ENCODE measurements at regions of chr4 and their contacts with region 1.

Region 1: GRCh38 chr4:8315435-8316250 is 46.1 kb downstream of the HTRA3 start:
- DNase-seq: no peak
- ATAC-seq: peak; percentile 77
- H3K4me3 Mint-ChIP-seq: no peak overlapping the region
- H3K27ac Mint-ChIP-seq: no peak overlapping the region
- H3K4me1 Mint-ChIP-seq: peaks cover 18% of the 10 kb centered on the region
- H3K27me3 Mint-ChIP-seq: peaks cover 3% of the 10 kb centered on the region; the same call in 1 of the 2 replicates
- CTCF ChIP-seq: no peak

Region 2: GRCh38 chr4:7557447-7557846 is 758.2 kb before region 1 on chr4:
- CTCF ChIA-PET with region 1: no interaction called
- POLR2A ChIA-PET with region 1: no interaction called
- DNase-seq: no peak
- ATAC-seq: no peak
- H3K4me3 Mint-ChIP-seq: no peak overlapping the region
- H3K27ac Mint-ChIP-seq: no peak overlapping the region
- H3K4me1 Mint-ChIP-seq: no peaks in the 10 kb centered on the region
- H3K27me3 Mint-ChIP-seq: peaks cover 5% of the 10 kb centered on the region
- CTCF ChIP-seq: no peak

Region 3: DNA sequence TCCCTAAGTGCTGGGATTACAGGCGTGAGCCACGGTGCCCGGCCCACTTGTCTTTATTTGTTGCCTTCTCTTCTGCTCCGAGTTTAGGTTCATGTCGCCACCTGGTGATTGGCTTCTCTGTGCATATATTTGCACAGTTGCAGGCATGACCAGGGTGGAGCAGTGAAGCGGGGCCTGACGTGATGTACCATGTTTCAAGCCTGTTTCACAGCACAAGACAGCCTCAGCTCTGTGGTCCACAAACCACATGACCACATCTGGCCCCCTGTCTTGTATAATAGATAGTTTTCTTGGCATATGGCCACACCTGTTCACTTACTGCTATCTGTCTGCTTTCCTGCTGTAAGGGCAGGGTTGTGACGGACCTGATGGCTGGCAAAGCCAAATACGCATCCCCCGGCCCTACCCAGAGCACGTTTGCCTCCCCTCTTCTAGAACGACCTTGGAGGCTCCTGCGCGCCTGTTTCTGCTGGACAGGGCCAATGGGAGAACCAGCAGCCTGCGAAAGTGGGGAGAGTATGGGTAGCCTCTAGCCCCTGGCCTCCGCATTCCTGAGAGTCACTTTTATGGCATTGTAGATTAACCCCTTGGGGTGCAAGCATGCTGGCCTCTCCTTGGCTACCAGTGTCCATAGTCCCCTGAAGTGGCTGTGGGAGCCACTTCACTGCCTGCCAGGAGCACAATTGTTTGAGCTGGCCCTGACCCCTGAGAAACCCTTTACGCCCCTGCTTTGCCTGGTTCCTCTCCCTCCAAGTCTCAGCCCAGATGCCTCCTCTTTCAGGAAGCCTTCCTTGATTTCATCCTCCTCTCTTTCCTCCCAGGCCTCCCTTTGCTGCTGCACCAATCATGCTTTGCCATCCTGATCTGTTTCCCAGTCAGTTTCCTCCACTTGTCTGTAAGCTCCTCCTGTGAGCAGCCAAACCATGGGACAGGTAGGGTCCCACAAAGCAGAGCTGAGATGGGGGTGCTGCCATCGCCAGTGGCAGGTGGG is 122.6 kb before region 1 on chr4:
- CTCF ChIA-PET with region 1: no interaction called
- POLR2A ChIA-PET with region 1: no interaction called
- DNase-seq: no peak
- ATAC-seq: peak; percentile 18; the same call in 1 of the 2 replicates
- H3K4me3 Mint-ChIP-seq: no peak overlapping the region
- H3K27ac Mint-ChIP-seq: no peak overlapping the region
- H3K4me1 Mint-ChIP-seq: peaks cover 3% of the 10 kb centered on the region; the same call in 1 of the 2 replicates
- H3K27me3 Mint-ChIP-seq: no peaks in the 10 kb centered on the region
- CTCF ChIP-seq: no peak

Region 4: GRCh38 chr4:8267077-8267476 is 48.6 kb before region 1 on chr4:
- CTCF ChIA-PET with region 1: interaction called, 18 read pairs
- POLR2A ChIA-PET with region 1: no interaction called
- DNase-seq: peak; percentile 78
- ATAC-seq: peak; percentile 68
- H3K4me3 Mint-ChIP-seq: no peak overlapping the region
- H3K27ac Mint-ChIP-seq: no peak overlapping the region
- H3K4me1 Mint-ChIP-seq: peaks cover 7% of the 10 kb centered on the region; the same call in 1 of the 2 replicates
- H3K27me3 Mint-ChIP-seq: peaks cover 30% of the 10 kb centered on the region
- CTCF ChIP-seq: peak; percentile 65

Region 5: DNA sequence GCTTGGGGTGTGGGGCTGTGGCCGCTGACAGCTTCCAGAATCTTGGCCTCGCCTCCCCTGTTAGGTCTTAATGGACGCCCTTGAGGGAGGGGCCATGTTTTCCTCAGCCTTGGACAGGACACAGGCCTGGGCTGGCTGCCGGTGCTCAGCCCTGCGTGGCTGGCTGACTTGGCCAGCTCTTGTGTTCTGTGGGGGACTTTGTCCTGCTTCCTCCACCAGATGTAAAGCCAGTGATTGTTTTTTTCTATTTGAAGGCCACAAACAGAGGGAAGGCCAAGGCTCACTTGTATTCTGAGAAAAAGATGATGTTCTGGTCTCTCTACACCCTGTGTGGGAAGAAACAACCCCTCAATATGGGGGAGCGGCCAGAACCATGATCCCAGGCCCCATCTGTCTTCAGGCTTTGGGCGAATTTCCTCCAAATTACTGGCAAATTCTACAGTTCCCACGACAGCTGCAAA is 25.2 kb after region 1 on chr4:
- CTCF ChIA-PET with region 1: interaction called, 39 read pairs
- POLR2A ChIA-PET with region 1: no interaction called
- DNase-seq: no peak
- ATAC-seq: no peak
- H3K4me3 Mint-ChIP-seq: no peak overlapping the region
- H3K27ac Mint-ChIP-seq: no peak overlapping the region
- H3K4me1 Mint-ChIP-seq: peaks cover 7% of the 10 kb centered on the region
- H3K27me3 Mint-ChIP-seq: peaks cover 5% of the 10 kb centered on the region; the same call in 1 of the 2 replicates
- CTCF ChIP-seq: no peak

Region 6: GRCh38 chr4:8391972-8392371 is 76.3 kb after region 1 on chr4:
- CTCF ChIA-PET with region 1: interaction called, 25 read pairs
- POLR2A ChIA-PET with region 1: no interaction called
- DNase-seq: no peak
- ATAC-seq: no peak
- H3K4me3 Mint-ChIP-seq: no peak overlapping the region
- H3K27ac Mint-ChIP-seq: no peak overlapping the region
- H3K4me1 Mint-ChIP-seq: peaks cover 19% of the 10 kb centered on the region
- H3K27me3 Mint-ChIP-seq: no peaks in the 10 kb centered on the region
- CTCF ChIP-seq: no peak

Region 7: DNA sequence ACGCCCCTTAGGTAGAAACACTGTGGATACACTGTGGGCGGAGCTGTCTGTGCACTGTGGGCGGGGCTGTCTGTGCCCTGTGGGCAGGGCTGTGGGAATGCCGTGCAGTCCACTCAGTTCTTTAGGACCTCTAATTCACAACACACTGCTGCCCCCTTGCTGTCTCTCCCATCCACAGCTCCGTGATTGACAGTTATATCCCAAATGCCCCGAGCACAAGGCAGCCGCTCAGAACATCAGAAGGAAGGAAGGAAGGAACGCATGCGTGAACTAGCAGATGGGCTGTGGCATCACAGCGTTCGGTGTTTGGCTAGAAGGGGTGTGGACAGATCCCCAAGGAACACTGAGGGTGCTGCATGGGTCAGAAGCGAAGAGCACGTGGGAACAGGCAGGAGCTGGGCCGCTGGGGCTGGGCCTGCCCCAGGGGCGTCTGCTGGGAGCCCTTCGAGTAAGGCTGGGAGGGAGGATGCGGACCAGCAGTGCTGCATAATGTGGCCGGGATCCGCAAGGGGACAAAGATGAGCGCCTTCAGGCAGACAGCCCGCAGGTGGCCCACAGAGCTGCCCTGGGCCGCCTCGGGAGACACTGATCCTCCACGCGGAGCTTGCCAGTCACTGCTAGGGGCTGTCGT is 95.1 kb after region 1 on chr4:
- CTCF ChIA-PET with region 1: interaction called, 32 read pairs
- POLR2A ChIA-PET with region 1: no interaction called
- DNase-seq: peak; percentile 85
- ATAC-seq: peak; percentile 92
- H3K4me3 Mint-ChIP-seq: no peak overlapping the region
- H3K27ac Mint-ChIP-seq: peak overlapping the region; percentile 95
- H3K4me1 Mint-ChIP-seq: peaks cover 9% of the 10 kb centered on the region
- H3K27me3 Mint-ChIP-seq: peaks cover 2% of the 10 kb centered on the region; the same call in 1 of the 2 replicates
- CTCF ChIP-seq: no peak

Region 8: DNA sequence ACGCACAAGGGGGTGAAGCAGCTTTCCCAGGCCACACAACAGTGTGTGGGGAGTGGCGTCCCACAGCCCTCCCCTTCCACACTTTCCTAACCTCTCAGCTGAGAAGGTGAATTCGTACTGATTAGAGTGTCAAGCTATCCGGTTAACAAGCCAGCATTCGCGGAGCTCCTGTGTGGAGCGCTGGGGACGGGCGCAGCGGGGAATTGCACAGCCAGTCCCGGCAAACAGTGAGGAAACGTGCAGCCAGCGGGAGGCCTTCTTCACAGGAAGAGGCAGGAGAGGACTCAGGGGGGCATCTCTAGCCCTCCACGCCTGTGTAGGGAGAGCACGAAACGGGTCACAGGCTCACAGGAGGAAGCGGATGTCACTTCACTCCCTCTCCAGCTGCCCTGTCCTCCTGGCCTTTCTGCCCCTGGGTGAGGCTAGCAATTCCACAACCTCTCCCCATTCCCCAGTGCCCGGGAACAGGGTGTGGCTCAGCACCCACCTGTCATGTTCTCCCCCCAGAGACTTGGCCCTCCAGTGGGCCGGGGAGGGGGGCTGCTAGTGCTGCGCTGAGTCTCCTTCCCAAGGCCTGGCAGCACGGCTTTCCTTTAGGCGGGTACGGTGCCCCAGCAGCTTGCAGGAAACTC is 394.2 kb after region 1 on chr4:
- CTCF ChIA-PET with region 1: no interaction called
- POLR2A ChIA-PET with region 1: no interaction called
- DNase-seq: peak; percentile 12
- ATAC-seq: no peak
- H3K4me3 Mint-ChIP-seq: no peak overlapping the region
- H3K27ac Mint-ChIP-seq: no peak overlapping the region; the same call in 1 of the 2 replicates
- H3K4me1 Mint-ChIP-seq: peaks cover 9% of the 10 kb centered on the region
- H3K27me3 Mint-ChIP-seq: peaks cover 6% of the 10 kb centered on the region; the same call in 1 of the 2 replicates
- CTCF ChIP-seq: no peak

Measured in WTC11 (cell line).